PC-3 (cell line): ENCODE measurements at regions of chr9 and their contacts with region 1.

Region 1: DNA sequence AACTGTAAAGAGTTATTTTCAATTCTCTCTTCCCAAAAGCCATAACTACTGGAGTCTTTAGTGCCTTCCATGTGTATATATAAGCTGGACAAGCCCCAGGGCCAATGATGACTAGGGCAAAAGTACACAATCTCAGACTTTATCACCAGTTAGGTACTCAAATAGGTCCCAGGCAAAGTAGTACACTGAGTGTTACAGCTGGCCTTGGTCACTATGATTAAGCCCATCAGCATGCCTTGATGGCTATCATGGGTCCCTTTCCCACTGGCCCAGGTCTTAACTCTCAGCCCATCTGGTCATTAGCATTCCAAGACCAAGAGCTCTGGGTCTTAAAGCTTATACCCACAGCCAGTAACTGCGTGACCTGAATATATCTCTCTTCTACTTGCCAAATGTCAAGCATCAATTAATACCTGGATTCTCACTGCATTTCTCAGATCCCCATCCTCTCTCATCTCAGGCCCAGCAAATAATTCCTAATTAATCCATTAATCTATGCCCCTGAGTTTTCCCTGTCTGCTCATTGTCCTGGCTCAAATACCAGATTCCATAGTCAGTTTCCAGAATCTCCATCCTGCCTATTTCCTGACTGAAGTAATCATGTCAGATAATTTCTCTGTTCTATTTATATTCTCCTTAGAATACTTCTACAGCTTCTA is 62.3 kb downstream of the NR6A1 start:
- DNase-seq: peak; percentile 83
- ATAC-seq: peak; percentile 86
- H3K4me3 ChIP-seq: no peak overlapping the region
- H3K27ac ChIP-seq: peak overlapping the region; percentile 79
- H3K4me1 ChIP-seq: peaks cover 26% of the 10 kb centered on the region
- H3K27me3 ChIP-seq: no peaks in the 10 kb centered on the region
- CTCF ChIP-seq: no peak

Region 2: DNA sequence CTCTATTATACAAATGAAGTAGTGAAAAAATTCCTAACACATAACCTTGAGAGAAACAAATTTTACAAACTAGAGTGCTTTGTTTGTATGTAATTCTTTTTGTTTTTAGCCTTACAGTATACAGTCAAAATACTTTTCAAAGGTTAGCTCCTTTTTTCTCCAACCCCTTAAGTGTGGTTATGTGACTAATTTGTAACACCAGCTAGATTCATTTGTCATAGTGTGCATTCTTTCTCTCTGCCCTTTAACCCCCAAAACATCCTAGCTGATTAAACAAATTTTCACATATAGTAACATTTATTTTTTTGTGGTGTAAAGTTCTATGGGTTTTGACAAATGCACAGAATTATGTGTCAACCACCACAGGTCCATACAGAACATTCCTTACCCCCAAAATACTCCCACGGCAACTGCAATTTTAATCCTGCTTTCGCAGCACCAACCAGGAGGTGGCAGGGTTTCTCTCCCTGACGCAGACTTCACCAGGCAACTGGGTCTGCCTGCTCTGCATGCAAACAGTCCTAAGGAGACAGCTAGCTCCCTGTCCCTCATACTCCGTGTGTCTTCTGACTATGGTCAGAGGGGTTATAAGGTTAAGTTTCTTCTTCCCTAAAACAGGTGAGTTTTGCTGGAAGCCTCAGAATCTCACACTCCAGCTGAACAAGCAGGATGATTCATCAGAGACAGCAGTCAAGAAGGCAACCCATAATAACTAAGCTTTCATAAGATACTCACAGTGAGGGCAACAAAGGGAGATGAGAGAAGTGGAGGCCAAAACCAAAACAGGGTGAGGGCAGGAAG is 157.1 kb before region 1 on chr9:
- CTCF ChIA-PET with region 1: interaction called, 9 read pairs
- POLR2A ChIA-PET with region 1: no interaction called
- intact Hi-C with region 1: loop called (anchors 1 kb)
- DNase-seq: peak; percentile 64
- ATAC-seq: peak; percentile 88
- H3K4me3 ChIP-seq: no peak overlapping the region
- H3K27ac ChIP-seq: no peak overlapping the region
- H3K4me1 ChIP-seq: peaks cover 13% of the 10 kb centered on the region; the same call in 1 of the 2 replicates
- H3K27me3 ChIP-seq: no peaks in the 10 kb centered on the region
- CTCF ChIP-seq: peak; percentile 84

Region 3: GRCh38 chr9:124617471-124618141 is 91.2 kb before region 1 on chr9:
- CTCF ChIA-PET with region 1: interaction called, 12 read pairs
- POLR2A ChIA-PET with region 1: no interaction called
- intact Hi-C with region 1: loop called (anchors 1 kb)
- DNase-seq: peak; percentile 78
- ATAC-seq: peak; percentile 96
- H3K4me3 ChIP-seq: no peak overlapping the region
- H3K27ac ChIP-seq: no peak overlapping the region
- H3K4me1 ChIP-seq: peaks cover 11% of the 10 kb centered on the region
- H3K27me3 ChIP-seq: no peaks in the 10 kb centered on the region
- CTCF ChIP-seq: peak; percentile 88

Region 4: GRCh38 chr9:124665391-124666058 is 43.2 kb before region 1 on chr9:
- CTCF ChIA-PET with region 1: no interaction called
- POLR2A ChIA-PET with region 1: no interaction called
- intact Hi-C with region 1: loop called (anchors 5 kb)
- DNase-seq: peak; percentile 81
- ATAC-seq: peak; percentile 88
- H3K4me3 ChIP-seq: 0 out of 2 replicates have a peak overlapping the region, but pooled peaks have one; percentile 6
- H3K27ac ChIP-seq: peak overlapping the region; percentile 78
- H3K4me1 ChIP-seq: peaks cover 51% of the 10 kb centered on the region
- H3K27me3 ChIP-seq: no peaks in the 10 kb centered on the region
- CTCF ChIP-seq: no peak

Region 5: DNA sequence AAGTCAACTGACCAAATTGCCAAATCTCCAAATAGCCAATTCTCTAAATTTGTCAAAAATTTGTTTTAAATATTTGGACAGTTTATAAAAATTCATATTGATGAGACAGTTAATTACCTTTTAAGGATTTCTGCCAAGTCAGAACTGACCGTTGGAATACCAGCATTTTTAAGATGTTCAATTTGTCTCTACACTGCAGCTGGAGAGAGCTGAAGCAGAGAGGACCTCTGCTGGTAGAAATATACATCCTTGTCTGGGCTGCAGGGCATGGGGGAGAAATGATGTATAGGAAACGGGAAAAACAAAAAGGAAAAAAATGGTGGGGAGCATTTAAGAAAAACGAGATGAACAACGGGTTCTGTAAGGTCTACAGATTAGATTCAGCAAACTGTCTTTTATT is 45.5 kb after region 1 on chr9:
- CTCF ChIA-PET with region 1: no interaction called
- POLR2A ChIA-PET with region 1: no interaction called
- intact Hi-C with region 1: loop called (anchors 1 kb)
- DNase-seq: peak; percentile 32
- ATAC-seq: peak; percentile 78
- H3K4me3 ChIP-seq: no peak overlapping the region
- H3K27ac ChIP-seq: no peak overlapping the region
- H3K4me1 ChIP-seq: 0 out of 2 replicates have a peak, but pooled peaks cover 2% of the 10 kb centered on the region
- H3K27me3 ChIP-seq: no peaks in the 10 kb centered on the region
- CTCF ChIP-seq: peak; percentile 64

Region 6: DNA sequence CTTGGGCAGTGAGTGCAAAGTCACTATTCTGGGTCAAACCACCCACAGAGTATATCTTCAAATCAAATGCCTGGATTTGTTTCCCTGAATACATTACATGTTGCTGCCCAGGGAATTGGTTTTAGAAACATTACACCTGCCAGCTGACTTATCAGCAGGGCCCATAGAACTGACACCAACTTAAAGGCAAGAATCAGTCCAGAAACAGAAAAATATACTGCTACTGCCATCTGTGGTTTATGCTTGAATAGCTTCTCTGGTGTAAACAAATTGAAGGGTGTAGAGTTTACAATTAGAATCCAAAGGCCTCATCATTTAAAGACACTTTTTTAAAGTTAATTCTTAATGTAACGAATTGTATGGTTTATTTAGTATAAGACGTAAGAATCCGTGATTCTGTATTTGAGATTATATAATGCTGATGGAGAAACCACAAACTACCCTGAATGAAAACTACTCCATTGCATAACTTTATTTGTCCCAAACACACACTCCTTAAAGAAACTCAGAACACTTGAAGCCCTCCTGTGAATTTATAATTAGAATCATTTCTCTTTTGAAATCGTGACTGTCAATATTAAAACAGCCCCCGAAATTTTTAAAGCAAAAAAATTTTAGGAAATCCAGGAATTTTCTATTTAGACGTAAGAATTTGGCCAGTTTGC is 56.1 kb after region 1 on chr9:
- CTCF ChIA-PET with region 1: interaction called, 3 read pairs
- POLR2A ChIA-PET with region 1: no interaction called
- intact Hi-C with region 1: loop called (anchors 2 kb)
- DNase-seq: peak; percentile 35
- ATAC-seq: peak; percentile 40; the same call in 1 of the 2 replicates
- H3K4me3 ChIP-seq: no peak overlapping the region
- H3K27ac ChIP-seq: no peak overlapping the region
- H3K4me1 ChIP-seq: no peaks in the 10 kb centered on the region
- H3K27me3 ChIP-seq: no peaks in the 10 kb centered on the region
- CTCF ChIP-seq: peak; percentile 55

Region 7: GRCh38 chr9:124812401-124813016 is 103.7 kb after region 1 on chr9:
- CTCF ChIA-PET with region 1: no interaction called
- POLR2A ChIA-PET with region 1: no interaction called
- intact Hi-C with region 1: no loop called
- DNase-seq: peak; percentile 84
- ATAC-seq: peak; percentile 84
- H3K4me3 ChIP-seq: no peak overlapping the region
- H3K27ac ChIP-seq: peak overlapping the region; percentile 88
- H3K4me1 ChIP-seq: peaks cover 34% of the 10 kb centered on the region
- H3K27me3 ChIP-seq: no peaks in the 10 kb centered on the region
- CTCF ChIP-seq: no peak